ENCODE measurements at regions of chr3 and their contacts with region 1.

Region 1: GRCh38 chr3:56997675-56998074 is 62.8 kb upstream of the SPATA12 start:
- DNase-seq: no peak
- H3K4me3 ChIP-seq: no peak overlapping the region
- H3K27ac ChIP-seq: peak overlapping the region in 3 of 4 donors; percentile 0 to 81 (median 51)
- H3K4me1 ChIP-seq: peaks cover 0 to 38% (median 15%) of the 10 kb centered on the region in 3 donors
- H3K27me3 ChIP-seq: no peaks in the 10 kb centered on the region
- CTCF ChIP-seq: no peak
- POLR2A ChIP-seq: no peak

Region 2: GRCh38 chr3:57098418-57099310 is 101.0 kb after region 1 on chr3:
- intact Hi-C with region 1: loop called (anchors 5 kb)
- DNase-seq: no peak
- H3K4me3 ChIP-seq: no peak overlapping the region
- H3K27ac ChIP-seq: no peak overlapping the region
- H3K4me1 ChIP-seq: peaks cover 0 to 6% (median 0%) of the 10 kb centered on the region in 3 donors
- H3K27me3 ChIP-seq: no peaks in the 10 kb centered on the region
- CTCF ChIP-seq: no peak
- POLR2A ChIP-seq: no peak

Region 3: GRCh38 chr3:57141719-57142410 is 144.2 kb after region 1 on chr3:
- intact Hi-C with region 1: no loop called
- DNase-seq: no peak
- H3K4me3 ChIP-seq: no peak overlapping the region
- H3K27ac ChIP-seq: no peak overlapping the region
- H3K4me1 ChIP-seq: no peaks in the 10 kb centered on the region
- H3K27me3 ChIP-seq: no peaks in the 10 kb centered on the region
- CTCF ChIP-seq: no peak
- POLR2A ChIP-seq: no peak

Region 4: DNA sequence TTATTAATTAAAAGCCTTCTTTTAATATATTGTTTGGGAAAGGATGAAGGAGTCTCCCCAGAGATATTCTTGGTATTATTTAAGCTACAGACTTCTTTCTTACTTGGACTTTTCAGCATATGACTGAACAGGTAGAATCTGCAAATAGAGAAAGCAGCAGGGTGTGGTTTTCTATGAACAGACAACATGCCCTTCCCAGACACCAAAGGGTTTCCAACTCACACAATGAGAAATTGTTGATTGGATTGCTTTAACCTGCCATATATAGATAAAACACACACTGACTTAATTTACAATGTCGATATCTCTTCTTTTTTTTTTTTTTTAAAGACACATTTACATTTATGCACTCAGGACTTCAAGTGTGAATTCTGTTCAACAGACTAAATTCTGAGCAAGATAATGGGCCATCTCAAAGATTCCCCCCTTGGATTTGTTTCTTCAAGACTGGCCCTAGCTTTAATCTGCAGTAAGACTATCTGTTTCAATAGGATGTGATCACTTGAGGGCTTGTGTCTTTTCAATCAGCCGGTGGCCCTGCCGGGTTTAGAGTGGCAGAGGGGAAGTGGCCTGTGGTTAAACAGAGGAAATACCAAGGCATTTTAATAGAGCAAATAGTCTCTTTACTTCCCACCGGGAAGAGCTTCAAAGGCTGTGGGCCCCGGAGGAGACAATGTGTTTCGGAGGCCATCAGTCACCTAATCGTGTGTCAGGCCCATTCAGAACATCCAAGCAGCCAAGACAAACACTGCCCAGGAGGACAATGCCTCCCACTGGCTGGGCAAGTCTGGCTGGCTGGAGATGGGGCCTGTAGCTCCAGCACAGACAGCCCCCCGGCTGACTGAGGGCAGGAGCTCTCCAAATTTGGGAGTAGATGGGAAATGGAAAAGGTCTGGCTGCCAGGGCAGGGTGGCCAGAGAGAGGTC is 161.4 kb after region 1 on chr3:
- intact Hi-C with region 1: loop called (anchors 10 kb)
- DNase-seq: no peak
- H3K4me3 ChIP-seq: no peak overlapping the region
- H3K27ac ChIP-seq: peak overlapping the region in 3 of 4 donors; percentile 26 to 59 (median 32)
- H3K4me1 ChIP-seq: peaks cover 4 to 61% (median 19%) of the 10 kb centered on the region in 3 donors
- H3K27me3 ChIP-seq: peaks cover 0 to 14% (median 0%) of the 10 kb centered on the region in 4 donors
- CTCF ChIP-seq: no peak
- POLR2A ChIP-seq: no peak

Measured in esophagus squamous epithelium (tissue), 5 donors.